Activated CD4-positive, alpha-beta memory T cell treated with anti-CD3 and anti-CD28 coated beads for 36 hours (primary cell): ENCODE measurements at regions of chr9 and their contacts with region 1.

Region 1: GRCh38 chr9:131277910-131278701 is 1.8 kb upstream of the FAM78A start:
- DNase-seq: peak; percentile 86
- H3K4me3 Mint-ChIP-seq: peak overlapping the region; percentile 69
- H3K27ac Mint-ChIP-seq: peak overlapping the region; percentile 70
- H3K4me1 Mint-ChIP-seq: peaks cover 19% of the 10 kb centered on the region
- H3K27me3 Mint-ChIP-seq: peaks cover 6% of the 10 kb centered on the region

Region 2: GRCh38 chr9:131117116-131117761 is 160.9 kb before region 1 on chr9:
- CTCF ChIA-PET with region 1: no interaction called
- POLR2A ChIA-PET with region 1: no interaction called
- intact Hi-C with region 1: no loop called
- DNase-seq: no peak
- H3K4me3 Mint-ChIP-seq: no peak overlapping the region
- H3K27ac Mint-ChIP-seq: no peak overlapping the region
- H3K4me1 Mint-ChIP-seq: no peaks in the 10 kb centered on the region
- H3K27me3 Mint-ChIP-seq: peaks cover 7% of the 10 kb centered on the region

Region 3: DNA sequence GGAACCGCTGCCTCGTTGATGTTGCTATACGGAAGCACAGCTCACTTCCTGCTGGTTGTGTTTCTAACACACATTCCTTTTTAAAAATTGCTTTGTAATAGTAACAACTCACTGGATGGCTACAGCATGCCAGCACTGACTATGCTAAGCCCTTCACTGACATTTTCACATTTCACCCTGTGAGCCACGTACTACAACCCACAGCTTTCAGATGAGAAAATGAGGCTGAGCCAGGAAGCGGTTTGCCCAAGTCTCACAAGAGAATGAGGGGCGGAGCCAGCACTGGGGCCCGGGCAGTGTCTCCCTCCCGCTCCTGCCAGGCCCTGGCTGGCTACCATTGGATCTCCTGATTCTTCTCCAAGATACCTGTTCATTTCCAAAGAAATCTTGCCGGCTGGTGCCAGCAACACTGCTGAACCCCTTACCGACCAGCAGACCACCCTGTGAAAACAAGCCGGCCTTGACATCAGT is 40.1 kb before region 1 on chr9:
- CTCF ChIA-PET with region 1: interaction called, 3 read pairs
- POLR2A ChIA-PET with region 1: interaction called, 3 read pairs
- intact Hi-C with region 1: loop called (anchors 1 kb)
- DNase-seq: peak; percentile 93
- H3K4me3 Mint-ChIP-seq: peak overlapping the region; percentile 59
- H3K27ac Mint-ChIP-seq: peak overlapping the region; percentile 94
- H3K4me1 Mint-ChIP-seq: peaks cover 47% of the 10 kb centered on the region
- H3K27me3 Mint-ChIP-seq: no peaks in the 10 kb centered on the region

Region 4: DNA sequence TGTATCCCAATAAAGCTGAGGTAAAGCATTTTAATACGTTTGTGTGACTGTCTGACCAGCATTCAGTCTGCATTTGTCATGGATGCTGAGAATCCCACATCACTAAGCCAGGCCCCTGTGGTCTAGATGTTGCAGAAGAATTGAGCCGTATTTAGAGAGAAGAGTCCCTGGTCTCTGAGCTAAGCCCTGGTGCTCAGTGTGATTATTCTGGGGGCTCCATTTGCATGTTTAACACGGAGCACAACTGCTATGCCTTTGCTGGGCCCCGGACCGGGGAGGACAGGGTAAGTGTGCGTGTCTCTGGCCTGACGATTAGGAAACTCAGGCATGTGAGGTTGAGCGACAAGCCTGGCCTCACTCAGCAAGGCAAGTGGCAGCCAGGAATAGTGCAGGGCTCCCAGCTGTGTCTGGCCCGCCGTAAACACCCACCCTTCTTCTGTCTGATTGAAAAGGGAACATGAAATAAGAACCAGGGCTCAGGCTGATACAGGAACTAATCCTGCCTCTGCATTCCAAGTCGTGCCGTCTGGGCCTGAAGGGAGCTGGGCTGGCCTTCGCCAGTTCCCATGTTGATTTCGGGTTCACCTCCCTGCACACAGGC is 24.1 kb before region 1 on chr9:
- CTCF ChIA-PET with region 1: interaction called, 109 read pairs
- POLR2A ChIA-PET with region 1: interaction called, 180 read pairs
- intact Hi-C with region 1: loop called (anchors 1 kb)
- DNase-seq: no peak
- H3K4me3 Mint-ChIP-seq: peak overlapping the region; percentile 43
- H3K27ac Mint-ChIP-seq: peak overlapping the region; percentile 88
- H3K4me1 Mint-ChIP-seq: peaks cover 37% of the 10 kb centered on the region
- H3K27me3 Mint-ChIP-seq: no peaks in the 10 kb centered on the region

Region 5: DNA sequence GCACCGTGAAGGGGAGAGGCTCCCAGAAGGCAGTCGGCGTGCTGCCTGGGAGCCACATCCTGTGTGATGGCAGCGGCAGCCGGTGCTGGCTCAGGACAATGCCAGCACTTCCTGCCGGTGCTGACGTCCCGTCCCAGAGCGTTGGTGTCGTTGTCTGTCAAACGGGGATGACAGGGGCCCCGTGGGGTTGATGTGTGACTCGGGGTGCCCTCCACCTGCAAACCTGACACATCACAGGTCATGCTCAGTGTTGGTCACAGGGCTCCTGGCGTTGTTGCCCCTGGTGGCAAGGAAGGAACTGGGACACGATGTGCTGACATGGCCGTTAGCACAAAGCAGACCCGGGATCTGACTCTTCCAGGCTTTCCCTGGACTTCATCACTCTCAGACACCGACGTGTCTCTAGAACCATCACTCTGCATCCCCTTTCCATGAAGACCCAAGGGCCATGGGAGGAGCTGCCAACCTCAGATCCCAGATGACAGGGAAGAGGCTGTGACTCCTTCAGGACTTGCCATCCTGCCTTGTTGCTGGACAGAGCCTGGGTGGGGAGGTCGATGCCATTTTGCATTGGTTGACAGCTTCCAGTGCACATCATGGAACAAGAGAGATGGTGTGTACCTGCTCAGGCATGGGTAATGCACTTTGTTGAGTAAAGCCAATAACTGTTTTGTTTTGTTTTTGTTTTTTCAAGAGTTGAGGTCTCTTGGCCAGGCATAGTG is 32.9 kb after region 1 on chr9:
- CTCF ChIA-PET with region 1: no interaction called
- POLR2A ChIA-PET with region 1: no interaction called
- intact Hi-C with region 1: loop called (anchors 2 kb)
- DNase-seq: peak; percentile 87
- H3K4me3 Mint-ChIP-seq: peak overlapping the region; percentile 35
- H3K27ac Mint-ChIP-seq: peak overlapping the region; percentile 25
- H3K4me1 Mint-ChIP-seq: peaks cover 10% of the 10 kb centered on the region
- H3K27me3 Mint-ChIP-seq: peaks cover 2% of the 10 kb centered on the region

Region 6: GRCh38 chr9:131464354-131465000 is 186.4 kb after region 1 on chr9:
- CTCF ChIA-PET with region 1: no interaction called
- POLR2A ChIA-PET with region 1: no interaction called
- intact Hi-C with region 1: no loop called
- DNase-seq: no peak
- H3K4me3 Mint-ChIP-seq: no peak overlapping the region
- H3K27ac Mint-ChIP-seq: no peak overlapping the region
- H3K4me1 Mint-ChIP-seq: no peaks in the 10 kb centered on the region
- H3K27me3 Mint-ChIP-seq: no peaks in the 10 kb centered on the region

Region 7: DNA sequence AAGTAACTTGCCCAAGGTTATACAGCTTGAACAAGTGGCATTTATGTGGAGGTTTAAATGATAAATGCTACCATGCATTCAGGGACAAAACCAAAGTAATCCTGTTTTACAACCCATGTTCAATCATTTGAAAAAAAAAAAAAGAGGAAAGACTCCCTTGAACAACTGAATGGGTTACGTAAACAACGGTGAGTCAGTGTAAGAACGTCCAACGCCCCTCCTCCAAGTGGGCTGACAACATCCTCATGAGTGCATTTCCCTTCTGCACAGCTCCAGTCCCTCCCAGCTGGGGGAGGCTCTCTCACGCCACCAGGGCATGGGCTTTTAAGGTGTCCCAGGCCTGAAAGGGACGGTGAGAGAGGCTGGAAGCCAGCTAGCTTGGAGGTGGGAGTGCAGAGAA is 357.2 kb after region 1 on chr9:
- CTCF ChIA-PET with region 1: no interaction called
- POLR2A ChIA-PET with region 1: no interaction called
- intact Hi-C with region 1: no loop called
- DNase-seq: peak; percentile 90
- H3K4me3 Mint-ChIP-seq: peak overlapping the region; percentile 12
- H3K27ac Mint-ChIP-seq: peak overlapping the region; percentile 93
- H3K4me1 Mint-ChIP-seq: peaks cover 68% of the 10 kb centered on the region
- H3K27me3 Mint-ChIP-seq: no peaks in the 10 kb centered on the region